ENCODE measurements at regions of chr11 and their contacts with region 1.

Region 1: DNA sequence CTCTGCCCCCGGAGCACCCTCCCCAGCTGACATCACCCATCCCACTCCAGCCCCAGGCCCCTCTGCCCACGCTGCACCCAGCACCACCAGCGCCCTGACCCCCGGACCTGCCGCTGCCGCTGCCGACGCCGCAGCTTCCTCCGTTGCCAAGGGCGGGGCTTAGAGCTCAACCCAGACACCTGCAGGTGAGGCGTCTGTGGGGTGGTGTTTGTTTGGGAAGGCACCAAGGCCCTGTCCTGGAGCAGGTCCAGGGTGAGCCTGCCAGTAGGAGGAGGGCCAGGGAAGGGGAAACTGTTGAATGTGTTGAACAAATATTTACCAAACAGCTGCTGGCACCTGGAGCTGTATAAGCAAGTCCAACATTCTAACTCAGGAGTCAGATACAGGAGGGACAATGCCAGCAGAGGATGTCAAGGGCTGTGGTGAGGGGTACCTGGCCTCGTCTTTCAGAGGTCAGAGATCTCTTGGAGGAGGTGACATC is 3.1 kb downstream of the VEGFB start:
- DNase-seq: peak; percentile 95
- H3K4me3 ChIP-seq: no peak overlapping the region
- H3K27ac ChIP-seq: peak overlapping the region; percentile 52 to 72
- H3K4me1 ChIP-seq: peaks cover 20% of the 10 kb centered on the region
- H3K27me3 ChIP-seq: no peaks in the 10 kb centered on the region
- CTCF ChIP-seq: peak in 2 of 4 experiments; percentile 40 to 42
- POLR2A ChIP-seq: no peak

Region 2: GRCh38 chr11:64204464-64204989 is 33.0 kb before region 1 on chr11:
- intact Hi-C with region 1: no loop called
- DNase-seq: peak; percentile 94
- H3K4me3 ChIP-seq: no peak overlapping the region
- H3K27ac ChIP-seq: peak overlapping the region in 1 of 2 donors; percentile 16
- H3K4me1 ChIP-seq: no peaks in the 10 kb centered on the region
- H3K27me3 ChIP-seq: no peaks in the 10 kb centered on the region
- CTCF ChIP-seq: peak; percentile 24 to 90 (median 76)
- POLR2A ChIP-seq: no peak

Region 3: DNA sequence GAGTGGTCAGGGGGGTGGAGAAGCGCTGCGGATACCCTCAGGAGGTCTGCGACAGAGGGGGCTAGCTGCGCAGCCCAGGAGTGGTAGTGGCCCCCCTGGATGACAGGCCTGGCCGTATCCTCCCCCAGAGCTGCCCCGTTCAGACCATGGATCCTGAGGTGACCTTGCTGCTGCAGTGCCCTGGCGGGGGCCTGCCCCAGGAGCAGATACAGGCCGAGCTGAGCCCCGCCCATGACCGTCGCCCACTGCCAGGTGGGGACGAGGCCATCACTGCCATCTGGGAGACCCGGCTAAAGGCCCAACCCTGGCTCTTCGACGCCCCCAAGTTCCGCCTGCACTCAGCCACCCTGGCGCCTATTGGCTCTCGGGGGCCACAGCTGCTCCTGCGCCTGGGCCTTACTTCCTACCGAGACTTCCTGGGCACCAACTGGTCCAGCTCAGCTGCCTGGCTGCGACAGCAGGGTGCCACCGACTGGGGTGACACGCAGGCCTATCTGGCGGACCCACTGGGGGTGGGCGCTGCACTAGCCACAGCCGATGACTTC is 10.9 kb before region 1 on chr11:
- intact Hi-C with region 1: loop called (anchors 1 kb)
- DNase-seq: no peak
- H3K4me3 ChIP-seq: peak overlapping the region; percentile 51 to 92
- H3K27ac ChIP-seq: peak overlapping the region; percentile 86 to 88
- H3K4me1 ChIP-seq: peaks cover 20% of the 10 kb centered on the region
- H3K27me3 ChIP-seq: no peaks in the 10 kb centered on the region
- CTCF ChIP-seq: no peak
- POLR2A ChIP-seq: no peak

Region 4: DNA sequence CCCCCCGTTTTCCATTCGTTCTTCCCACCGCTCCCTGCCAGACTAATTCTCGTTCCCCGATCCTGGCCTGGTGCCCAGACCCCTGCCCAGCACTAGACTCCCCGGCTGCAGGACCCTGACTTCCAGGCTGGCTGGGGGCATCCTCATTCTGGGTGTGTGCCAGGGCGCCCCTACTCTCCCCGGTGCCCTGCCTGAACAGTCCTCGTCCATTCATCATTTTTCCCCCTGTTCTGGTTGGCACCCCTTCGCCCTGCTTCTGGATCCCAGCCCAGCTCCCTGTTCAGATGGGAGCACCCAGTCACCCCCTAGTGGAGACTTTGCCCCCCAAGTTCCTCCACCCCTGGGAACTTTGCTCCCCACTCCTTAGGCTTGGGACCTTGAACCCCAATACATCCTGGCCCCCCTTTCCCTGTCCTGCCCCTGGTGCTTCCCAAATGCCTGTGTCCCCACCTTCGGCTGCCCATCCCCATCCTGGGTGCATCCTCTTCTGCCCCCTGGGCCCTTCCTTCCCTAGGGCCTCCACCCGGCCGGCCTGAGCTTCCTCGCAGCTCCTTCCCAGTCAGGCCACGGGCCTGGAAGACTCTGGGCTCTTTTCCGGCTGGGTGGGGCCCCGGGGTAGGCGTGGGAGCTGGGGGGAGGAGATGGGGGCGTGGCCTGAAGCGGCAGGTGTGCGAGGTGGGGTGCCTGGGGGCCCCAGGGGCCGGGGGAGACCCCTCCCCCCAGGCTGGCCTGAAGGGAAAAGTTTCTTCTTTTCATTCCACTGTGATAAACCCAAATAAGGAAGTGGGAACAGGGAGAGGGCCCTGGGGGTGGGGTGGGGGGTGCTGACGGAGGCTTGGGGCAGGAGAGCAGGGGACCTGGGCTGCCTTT is 14.7 kb after region 1 on chr11:
- intact Hi-C with region 1: no loop called
- DNase-seq: peak; percentile 58
- H3K4me3 ChIP-seq: peak overlapping the region; percentile 73 to 90
- H3K27ac ChIP-seq: peak overlapping the region; percentile 70 to 83
- H3K4me1 ChIP-seq: peaks cover 11% of the 10 kb centered on the region
- H3K27me3 ChIP-seq: no peaks in the 10 kb centered on the region
- CTCF ChIP-seq: peak in 1 of 4 experiments; percentile 35
- POLR2A ChIP-seq: peak; percentile 59

Region 5: DNA sequence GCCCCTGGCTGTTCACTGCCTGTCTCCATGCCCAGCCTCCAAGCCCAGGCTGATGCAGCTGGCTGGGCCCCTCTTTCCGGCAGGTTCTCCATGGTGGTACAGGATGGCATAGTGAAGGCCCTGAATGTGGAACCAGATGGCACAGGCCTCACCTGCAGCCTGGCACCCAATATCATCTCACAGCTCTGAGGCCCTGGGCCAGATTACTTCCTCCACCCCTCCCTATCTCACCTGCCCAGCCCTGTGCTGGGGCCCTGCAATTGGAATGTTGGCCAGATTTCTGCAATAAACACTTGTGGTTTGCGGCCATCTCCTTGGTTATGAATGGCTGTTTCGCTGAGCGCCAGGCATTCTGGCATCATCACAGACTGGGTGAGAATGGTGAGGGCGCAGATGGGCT is 84.0 kb after region 1 on chr11:
- intact Hi-C with region 1: no loop called
- DNase-seq: peak; percentile 86
- H3K4me3 ChIP-seq: no peak overlapping the region
- H3K27ac ChIP-seq: peak overlapping the region; percentile 65 to 68
- H3K4me1 ChIP-seq: no peaks in the 10 kb centered on the region
- H3K27me3 ChIP-seq: no peaks in the 10 kb centered on the region
- CTCF ChIP-seq: no peak
- POLR2A ChIP-seq: peak; percentile 70

Measured in prostate gland (tissue), 2 donors.